ENCODE measurements at regions of chr1 and their contacts with region 1.

Region 1: DNA sequence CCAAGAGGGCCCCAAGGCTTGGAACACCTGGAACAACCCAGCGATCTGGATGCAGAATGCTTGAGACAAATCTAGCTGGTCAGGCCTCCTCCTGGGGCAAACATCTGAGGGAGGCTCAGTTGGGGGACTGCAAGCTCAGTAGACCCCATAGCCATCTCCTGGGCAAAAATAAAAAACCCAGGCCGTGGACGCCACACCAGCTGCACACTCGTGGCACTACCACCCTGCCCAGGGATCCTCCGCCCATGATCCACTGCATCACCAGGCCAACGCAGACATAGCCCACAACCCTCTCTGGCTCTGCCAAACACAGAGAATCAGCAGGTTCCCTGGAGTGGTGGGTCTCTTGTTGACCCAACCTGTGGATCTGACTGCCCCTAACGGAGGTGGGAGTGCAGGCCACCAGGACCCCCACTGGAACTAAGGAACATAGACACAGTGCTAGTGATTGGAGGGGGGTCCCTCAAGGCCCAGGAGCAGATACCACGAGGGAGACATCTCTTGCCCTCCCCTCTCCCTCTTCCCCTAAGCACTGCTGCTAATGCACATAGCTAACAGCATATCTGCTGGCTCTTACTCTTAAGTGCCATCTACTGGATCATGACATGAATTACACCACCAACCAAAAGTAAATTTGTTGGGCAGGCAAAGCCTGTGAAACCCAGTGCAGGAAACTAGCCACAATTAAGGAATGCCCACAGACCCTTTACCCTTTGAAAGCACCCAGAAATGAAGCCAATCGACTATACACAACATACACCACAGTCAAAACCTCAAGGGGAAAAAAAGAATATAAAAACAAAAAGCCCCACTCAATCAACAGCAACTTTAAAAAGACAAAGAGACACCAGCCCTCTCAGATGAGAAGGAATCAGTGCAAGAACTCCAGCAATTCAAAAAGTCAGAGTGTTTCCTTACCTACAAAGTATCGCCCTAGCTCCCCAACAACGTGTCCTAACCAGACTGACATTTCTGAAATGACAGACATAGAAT is 147.3 kb downstream of the CHD1L start:
- DNase-seq: no peak
- ATAC-seq: peak; percentile 83
- H3K4me3 Mint-ChIP-seq: no peak overlapping the region
- H3K27ac Mint-ChIP-seq: no peak overlapping the region
- H3K4me1 Mint-ChIP-seq: peaks cover 2% of the 10 kb centered on the region
- H3K27me3 Mint-ChIP-seq: peaks cover 6% of the 10 kb centered on the region
- CTCF ChIP-seq: peak; percentile 66

Region 2: DNA sequence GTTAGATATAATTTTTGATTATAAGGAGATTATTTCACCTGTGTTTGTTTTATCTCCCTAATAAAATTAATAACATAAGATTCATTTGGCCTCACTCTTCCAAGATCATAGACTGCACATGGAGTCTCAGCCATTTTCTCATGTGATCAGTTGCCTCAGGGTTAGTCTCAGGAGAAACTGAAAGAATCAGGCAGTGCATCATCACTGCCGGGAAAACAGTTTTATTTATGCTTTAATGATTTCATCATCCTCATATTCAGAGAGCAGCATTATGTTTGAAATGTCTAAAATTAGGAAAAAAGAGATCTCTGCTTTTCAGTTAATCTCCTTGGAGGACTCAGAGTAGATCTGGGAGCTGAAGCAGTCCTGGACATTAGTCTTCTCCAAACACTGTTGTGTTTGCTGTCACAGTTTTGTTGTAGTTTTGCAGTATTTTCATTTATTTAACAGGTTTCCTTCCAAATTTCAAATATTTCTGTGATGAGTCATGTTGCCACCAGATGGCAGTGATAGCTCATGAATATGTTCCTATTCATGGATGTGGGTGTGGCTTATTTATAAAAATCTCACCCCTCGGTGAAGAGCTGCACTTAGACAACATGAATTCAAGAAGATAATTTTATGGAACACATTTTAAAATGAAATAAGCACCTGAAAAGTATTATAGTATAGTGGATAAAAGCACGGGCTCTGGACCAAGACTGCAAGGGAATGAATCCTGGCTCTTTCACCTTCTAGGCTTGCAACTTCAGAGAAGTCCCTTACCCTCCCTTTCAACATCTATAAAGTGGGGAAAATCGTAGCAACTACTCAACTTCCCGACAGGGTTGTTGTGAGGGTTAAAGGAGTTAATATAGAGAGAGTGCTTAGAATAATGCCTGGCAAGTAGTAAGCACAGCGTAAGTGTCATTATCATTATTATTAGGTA is 116.2 kb before region 1 on chr1:
- CTCF ChIA-PET with region 1: interaction called, 41 read pairs
- POLR2A ChIA-PET with region 1: interaction called, 4 read pairs
- intact Hi-C with region 1: loop called (anchors 10 kb)
- DNase-seq: peak; percentile 27
- ATAC-seq: peak; percentile 49
- H3K4me3 Mint-ChIP-seq: no peak overlapping the region
- H3K27ac Mint-ChIP-seq: no peak overlapping the region
- H3K4me1 Mint-ChIP-seq: no peaks in the 10 kb centered on the region
- H3K27me3 Mint-ChIP-seq: no peaks in the 10 kb centered on the region
- CTCF ChIP-seq: peak; percentile 63

Region 3: DNA sequence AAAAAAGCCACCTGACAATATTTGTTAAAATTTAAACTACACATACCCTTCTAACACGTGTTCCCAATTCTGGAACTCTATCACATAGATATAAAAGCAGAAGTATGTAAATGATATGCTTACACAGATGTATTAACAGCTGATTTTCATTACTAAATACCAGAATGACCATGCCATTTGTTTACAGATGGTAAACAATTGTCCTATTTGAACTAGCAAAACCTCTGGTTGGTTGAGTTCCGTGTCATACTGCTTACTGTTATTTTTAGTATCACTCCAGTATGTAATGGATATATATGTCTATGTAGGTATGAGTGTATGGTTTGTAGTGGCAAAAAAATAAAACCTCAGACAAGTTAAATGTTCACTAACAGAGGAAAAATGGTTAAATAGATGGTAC is 76.6 kb before region 1 on chr1:
- CTCF ChIA-PET with region 1: no interaction called
- POLR2A ChIA-PET with region 1: no interaction called
- intact Hi-C with region 1: no loop called
- DNase-seq: no peak
- ATAC-seq: no peak
- H3K4me3 Mint-ChIP-seq: no peak overlapping the region
- H3K27ac Mint-ChIP-seq: no peak overlapping the region
- H3K4me1 Mint-ChIP-seq: no peaks in the 10 kb centered on the region
- H3K27me3 Mint-ChIP-seq: peaks cover 1% of the 10 kb centered on the region
- CTCF ChIP-seq: no peak

Region 4: GRCh38 chr1:147337040-147337630 is 52.7 kb before region 1 on chr1:
- CTCF ChIA-PET with region 1: interaction called, 4 read pairs
- POLR2A ChIA-PET with region 1: no interaction called
- intact Hi-C with region 1: loop called (anchors 10 kb)
- DNase-seq: no peak
- ATAC-seq: no peak
- H3K4me3 Mint-ChIP-seq: no peak overlapping the region
- H3K27ac Mint-ChIP-seq: no peak overlapping the region
- H3K4me1 Mint-ChIP-seq: no peaks in the 10 kb centered on the region
- H3K27me3 Mint-ChIP-seq: peaks cover 35% of the 10 kb centered on the region
- CTCF ChIP-seq: no peak

Region 5: DNA sequence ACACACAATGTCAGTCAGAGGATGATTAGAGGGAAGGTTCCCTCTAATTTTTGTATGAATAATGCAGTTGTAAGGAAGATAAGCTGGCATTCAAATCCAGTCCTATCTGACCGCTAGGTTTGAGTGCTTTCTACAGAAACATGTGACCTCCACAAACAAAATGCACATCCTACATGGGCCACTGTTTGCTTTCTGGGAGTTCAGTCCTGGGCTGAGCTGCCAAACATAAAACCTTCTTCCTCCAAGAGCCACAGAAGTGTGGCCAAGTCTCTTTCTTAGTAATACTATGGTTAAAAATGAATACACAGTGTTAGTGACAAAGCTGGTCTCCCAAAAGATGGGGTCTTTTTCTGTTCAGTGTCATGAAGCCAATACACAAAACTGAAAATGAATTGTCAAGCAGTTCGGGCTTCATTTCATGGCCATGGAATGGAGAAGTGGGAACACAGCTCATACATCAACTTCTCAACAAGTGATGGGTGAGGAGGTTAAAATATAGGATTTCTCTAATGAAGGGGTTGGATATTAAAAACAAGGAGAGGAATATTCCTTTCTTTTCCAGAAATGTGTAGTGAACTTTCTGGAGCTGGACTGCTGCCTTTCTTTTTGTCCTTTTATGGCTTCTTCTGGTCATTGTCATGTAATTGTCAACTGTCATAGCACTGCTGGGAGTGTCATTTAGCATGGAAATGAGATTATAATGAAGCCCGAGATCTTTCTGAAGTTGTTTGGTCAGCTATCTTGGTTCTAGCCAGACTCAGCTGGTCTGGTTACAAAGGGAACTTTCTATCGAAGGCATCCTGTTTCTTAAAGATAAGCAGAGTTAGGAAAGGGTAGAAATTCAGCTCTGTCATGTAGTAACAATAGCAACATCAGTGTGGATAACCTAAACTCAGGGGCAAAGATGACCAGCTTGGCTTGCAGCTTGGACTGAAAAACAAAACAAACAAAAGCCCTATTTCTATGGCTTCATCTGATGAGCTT is 12.3 kb before region 1 on chr1:
- CTCF ChIA-PET with region 1: interaction called, 25 read pairs
- POLR2A ChIA-PET with region 1: no interaction called
- intact Hi-C with region 1: no loop called
- DNase-seq: no peak
- ATAC-seq: no peak
- H3K4me3 Mint-ChIP-seq: no peak overlapping the region
- H3K27ac Mint-ChIP-seq: no peak overlapping the region
- H3K4me1 Mint-ChIP-seq: no peaks in the 10 kb centered on the region
- H3K27me3 Mint-ChIP-seq: peaks cover 13% of the 10 kb centered on the region
- CTCF ChIP-seq: no peak

Region 6: DNA sequence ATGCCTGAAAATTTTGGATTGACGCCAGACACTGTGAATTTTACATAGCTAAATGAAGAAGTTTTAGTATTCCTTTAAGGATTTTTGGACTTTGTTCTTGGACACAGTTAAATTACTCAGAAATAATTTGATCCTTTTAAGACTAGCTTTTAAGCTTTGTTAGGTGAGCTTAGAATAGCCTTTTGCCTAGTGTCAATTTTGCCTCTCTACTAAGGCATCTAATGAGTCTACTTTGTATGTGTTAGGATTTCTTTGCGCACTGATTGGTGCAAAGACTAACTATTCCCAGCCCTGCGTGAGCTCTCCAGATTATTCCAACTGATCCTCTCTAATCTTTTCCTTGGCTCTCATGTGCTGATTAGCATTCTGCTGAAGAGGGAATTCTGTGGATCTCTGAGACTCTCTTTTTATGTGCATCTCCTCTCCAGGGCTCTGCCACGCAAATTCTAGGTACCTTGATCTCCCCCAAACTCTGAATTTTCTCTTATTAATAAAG is 23.3 kb after region 1 on chr1:
- CTCF ChIA-PET with region 1: no interaction called
- POLR2A ChIA-PET with region 1: no interaction called
- intact Hi-C with region 1: no loop called
- DNase-seq: no peak
- ATAC-seq: no peak
- H3K4me3 Mint-ChIP-seq: no peak overlapping the region
- H3K27ac Mint-ChIP-seq: no peak overlapping the region
- H3K4me1 Mint-ChIP-seq: no peaks in the 10 kb centered on the region
- H3K27me3 Mint-ChIP-seq: peaks cover 17% of the 10 kb centered on the region
- CTCF ChIP-seq: no peak

Region 7: GRCh38 chr1:147434921-147435320 is 45.1 kb after region 1 on chr1:
- CTCF ChIA-PET with region 1: no interaction called
- POLR2A ChIA-PET with region 1: no interaction called
- intact Hi-C with region 1: no loop called
- DNase-seq: no peak
- ATAC-seq: no peak
- H3K4me3 Mint-ChIP-seq: no peak overlapping the region
- H3K27ac Mint-ChIP-seq: no peak overlapping the region
- H3K4me1 Mint-ChIP-seq: no peaks in the 10 kb centered on the region
- H3K27me3 Mint-ChIP-seq: peaks cover 12% of the 10 kb centered on the region
- CTCF ChIP-seq: no peak